ENCODE measurements at regions of chr1 and their contacts with region 1.

Region 1: DNA sequence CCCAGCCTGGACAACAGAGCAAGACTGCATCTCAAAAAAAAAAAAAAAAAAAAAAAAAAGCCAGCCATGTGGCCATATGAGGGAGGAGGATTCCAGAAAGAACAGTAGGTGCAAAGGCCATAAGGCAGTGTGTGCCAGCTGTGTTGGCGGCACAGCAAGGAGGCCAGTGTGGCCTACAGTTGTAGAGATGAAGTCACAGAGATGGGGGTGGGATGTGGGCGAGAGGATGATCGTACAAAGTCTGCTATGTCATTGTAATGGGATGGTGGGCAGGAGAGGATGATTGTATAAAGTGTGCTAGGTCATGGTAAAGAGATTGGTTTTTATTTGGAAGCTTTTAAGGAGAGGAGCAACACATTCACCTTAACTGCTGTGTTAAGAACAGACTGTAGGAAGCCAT is 9.8 kb upstream of the CR1 start:
- DNase-seq: no peak
- ATAC-seq: no peak
- H3K4me3 ChIP-seq: no peak overlapping the region
- H3K4me3 Mint-ChIP-seq: no peak overlapping the region
- H3K27ac ChIP-seq: no peak overlapping the region
- H3K27ac Mint-ChIP-seq: no peak overlapping the region
- H3K4me1 ChIP-seq: no peaks in the 10 kb centered on the region
- H3K4me1 Mint-ChIP-seq: peaks cover 0 to 6% (median 0%) of the 10 kb centered on the region in 7 donors
- H3K27me3 ChIP-seq: peaks cover 0 to 3% of the 10 kb centered on the region in 2 donors
- H3K27me3 Mint-ChIP-seq: peaks cover 0 to 18% (median 0%) of the 10 kb centered on the region in 5 donors

Region 2: GRCh38 chr1:206912445-206913095 is 573.6 kb before region 1 on chr1:
- CTCF ChIA-PET with region 1: no interaction called
- POLR2A ChIA-PET with region 1: no interaction called
- intact Hi-C with region 1: no loop called
- DNase-seq: peak; percentile 26 to 73 (median 67)
- ATAC-seq: peak; percentile 73
- H3K4me3 ChIP-seq: no peak overlapping the region
- H3K4me3 Mint-ChIP-seq: peak overlapping the region in 3 of 10 donors; percentile 67 to 85 (median 75)
- H3K27ac ChIP-seq: peak overlapping the region; percentile 90
- H3K27ac Mint-ChIP-seq: peak overlapping the region in 4 of 9 donors; percentile 83 to 96 (median 92)
- H3K4me1 ChIP-seq: peaks cover 59 to 93% of the 10 kb centered on the region in 2 donors
- H3K4me1 Mint-ChIP-seq: peaks cover 73 to 94% (median 92%) of the 10 kb centered on the region in 7 donors
- H3K27me3 ChIP-seq: no peaks in the 10 kb centered on the region
- H3K27me3 Mint-ChIP-seq: peaks cover 0 to 6% (median 0%) of the 10 kb centered on the region in 5 donors

Region 3: DNA sequence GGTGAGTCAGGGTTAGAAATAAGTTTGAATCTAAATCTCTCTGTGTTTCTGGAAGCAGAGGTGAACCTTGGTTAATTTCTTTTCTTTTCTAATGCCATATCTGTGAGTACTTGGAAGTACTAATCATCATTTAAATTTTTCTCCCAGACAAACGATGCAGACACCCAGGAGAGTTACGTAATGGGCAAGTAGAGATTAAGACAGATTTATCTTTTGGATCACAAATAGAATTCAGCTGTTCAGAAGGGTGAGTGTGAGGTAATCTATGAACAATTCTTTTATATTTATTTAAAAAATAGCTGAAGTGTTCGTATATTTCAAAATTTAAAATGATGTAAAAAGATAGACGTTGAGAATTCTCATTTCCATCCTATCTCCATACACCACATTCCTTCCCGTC is 370.9 kb before region 1 on chr1:
- CTCF ChIA-PET with region 1: no interaction called
- POLR2A ChIA-PET with region 1: no interaction called
- intact Hi-C with region 1: no loop called
- DNase-seq: no peak
- ATAC-seq: no peak
- H3K4me3 ChIP-seq: no peak overlapping the region
- H3K4me3 Mint-ChIP-seq: no peak overlapping the region
- H3K27ac ChIP-seq: no peak overlapping the region
- H3K27ac Mint-ChIP-seq: no peak overlapping the region
- H3K4me1 ChIP-seq: no peaks in the 10 kb centered on the region
- H3K4me1 Mint-ChIP-seq: no peaks in the 10 kb centered on the region
- H3K27me3 ChIP-seq: no peaks in the 10 kb centered on the region
- H3K27me3 Mint-ChIP-seq: peaks cover 0 to 25% (median 4%) of the 10 kb centered on the region in 5 donors

Region 4: DNA sequence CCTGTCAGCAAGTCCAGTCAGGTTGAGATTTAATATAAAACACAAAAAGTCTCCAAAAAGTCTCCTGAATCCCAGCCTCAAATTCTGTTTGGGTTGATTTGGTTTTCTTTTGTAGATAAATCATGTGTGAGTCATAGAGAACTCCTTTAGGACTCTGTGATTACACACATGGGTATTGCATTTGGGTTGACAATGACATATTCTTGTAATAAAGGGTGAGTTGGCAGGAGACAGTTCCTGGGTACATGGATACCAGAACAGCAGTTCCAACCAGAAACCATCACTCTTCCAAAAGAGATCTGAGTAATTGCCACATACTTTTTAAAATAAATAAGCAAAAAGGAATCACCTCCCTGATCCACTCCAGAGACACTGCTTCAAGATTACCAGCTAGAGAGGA is 23.2 kb before region 1 on chr1:
- CTCF ChIA-PET with region 1: no interaction called
- POLR2A ChIA-PET with region 1: interaction called, 4 read pairs
- intact Hi-C with region 1: loop called in 1 of 2 experiments (anchors 2 kb)
- DNase-seq: no peak
- ATAC-seq: no peak
- H3K4me3 ChIP-seq: no peak overlapping the region
- H3K4me3 Mint-ChIP-seq: peak overlapping the region in 5 of 10 donors; percentile 3 to 70 (median 14)
- H3K27ac ChIP-seq: no peak overlapping the region
- H3K27ac Mint-ChIP-seq: peak overlapping the region in 4 of 9 donors; percentile 7 to 87 (median 35)
- H3K4me1 ChIP-seq: peaks cover 4 to 62% of the 10 kb centered on the region in 2 donors
- H3K4me1 Mint-ChIP-seq: peaks cover 4 to 65% (median 22%) of the 10 kb centered on the region in 7 donors
- H3K27me3 ChIP-seq: peaks cover 0 to 5% of the 10 kb centered on the region in 2 donors
- H3K27me3 Mint-ChIP-seq: peaks cover 0 to 17% (median 0%) of the 10 kb centered on the region in 5 donors